IMR-90 (cell line): ENCODE measurements at regions of chr10 and their contacts with region 1.

Region 1: DNA sequence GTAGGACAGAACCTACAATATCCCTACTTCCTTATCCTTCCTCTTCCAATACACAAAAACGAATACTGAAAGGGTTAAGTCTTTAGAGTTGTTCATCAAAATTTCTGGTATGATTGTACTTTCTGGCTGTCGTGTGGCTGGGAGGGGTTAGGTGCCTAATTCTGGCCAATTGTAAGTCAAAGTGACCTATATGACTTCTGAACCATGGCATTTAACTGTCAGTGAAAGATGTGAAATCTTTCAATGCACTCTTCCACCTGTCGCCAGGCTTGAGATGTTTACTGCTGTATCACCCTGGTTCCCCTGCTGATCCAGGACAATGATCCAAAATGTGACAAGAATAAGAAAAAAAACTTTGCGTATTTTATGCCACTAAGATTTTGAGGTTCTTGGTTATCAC is 20.8 kb downstream of the EPC1 start:
- DNase-seq: no peak
- ATAC-seq: no peak
- H3K4me3 ChIP-seq: no peak overlapping the region
- H3K27ac ChIP-seq: no peak overlapping the region
- H3K4me1 ChIP-seq: peaks cover 2% of the 10 kb centered on the region; the same call in 1 of the 2 replicates
- H3K27me3 ChIP-seq: no peaks in the 10 kb centered on the region
- CTCF ChIP-seq: no peak
- POLR2A ChIP-seq: no peak
- RAD21 ChIP-seq: no peak

Region 2: DNA sequence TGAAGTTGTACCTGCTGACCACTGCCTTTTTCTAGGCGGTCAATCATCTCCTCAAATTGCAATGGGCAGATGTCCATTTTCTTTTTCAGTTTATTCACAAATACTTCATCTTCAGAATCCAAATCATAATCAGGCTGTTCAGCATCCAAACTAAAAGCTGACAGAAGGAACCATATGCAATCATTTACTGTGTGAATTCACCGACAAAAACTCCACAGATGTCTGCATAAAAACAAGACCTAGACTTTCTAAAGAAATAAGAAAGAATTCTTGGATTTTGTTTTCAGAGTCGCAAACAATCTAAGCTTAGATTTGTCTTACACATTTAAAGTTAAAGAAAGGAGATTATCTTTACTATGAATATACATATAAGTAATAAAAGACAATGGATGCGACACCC is 32.5 kb before region 1 on chr10:
- CTCF ChIA-PET with region 1: no interaction called
- POLR2A ChIA-PET with region 1: no interaction called
- dilution Hi-C with region 1: no loop called
- in situ Hi-C with region 1: no loop called
- intact Hi-C with region 1: loop called (anchors 5 kb)
- DNase-seq: no peak
- ATAC-seq: no peak
- H3K4me3 ChIP-seq: no peak overlapping the region
- H3K27ac ChIP-seq: no peak overlapping the region
- H3K4me1 ChIP-seq: peaks cover 5% of the 10 kb centered on the region
- H3K27me3 ChIP-seq: no peaks in the 10 kb centered on the region
- CTCF ChIP-seq: no peak
- POLR2A ChIP-seq: no peak
- RAD21 ChIP-seq: no peak